Ascending aorta (tissue), 2 donors: ENCODE measurements at regions of chr4 and their contacts with region 1.

Region 1: GRCh38 chr4:134337584-134337983 is 136.0 kb upstream of the PABPC4L start:
- DNase-seq: no peak
- H3K4me3 ChIP-seq: no peak overlapping the region
- H3K27ac ChIP-seq: no peak overlapping the region
- H3K4me1 ChIP-seq: peaks cover 0 to 3% of the 10 kb centered on the region in 2 donors
- H3K27me3 ChIP-seq: no peaks in the 10 kb centered on the region
- CTCF ChIP-seq: no peak

Region 2: DNA sequence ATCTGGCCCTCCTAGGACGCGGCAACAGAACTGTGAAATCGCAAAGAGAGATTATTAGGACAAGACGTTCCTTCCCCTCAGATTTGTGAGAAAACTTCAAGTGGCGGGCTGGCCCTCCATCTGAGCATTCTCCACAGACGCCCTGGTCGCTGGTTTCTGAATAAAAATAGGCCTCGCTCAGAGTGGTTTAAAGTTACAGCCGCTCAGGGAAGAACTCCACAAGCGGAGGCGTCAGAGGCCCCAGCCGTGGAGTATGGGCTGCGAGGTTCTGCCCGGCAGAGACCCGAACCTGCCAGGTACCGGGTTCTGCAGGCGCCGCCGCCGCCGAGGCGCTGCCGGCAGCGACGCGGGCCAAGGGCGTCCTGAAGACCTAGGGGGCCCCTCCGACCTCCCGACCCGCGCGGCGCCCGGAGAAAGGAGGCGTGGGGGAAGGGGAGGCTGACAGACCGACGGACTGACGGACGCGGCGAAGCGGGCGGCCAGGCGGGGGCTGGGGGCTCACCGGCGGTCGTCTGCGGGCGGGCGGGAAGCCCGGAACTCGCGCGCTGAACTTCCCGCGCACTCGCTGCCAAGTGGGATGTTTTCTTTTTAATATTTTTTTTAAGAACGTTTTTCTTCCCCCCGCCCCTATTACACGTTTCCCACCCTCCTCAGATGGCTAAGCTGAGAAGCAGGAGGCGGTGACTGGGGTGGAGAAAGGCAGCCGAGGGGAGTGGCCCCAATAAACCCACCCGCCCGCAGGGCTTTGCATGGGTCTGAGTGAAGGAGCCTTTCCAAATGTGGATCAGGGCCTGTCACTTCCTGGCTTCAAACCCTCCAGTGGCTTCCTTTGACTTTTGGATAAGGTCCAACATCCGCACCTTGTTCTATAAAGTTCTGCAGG is 136.1 kb before region 1 on chr4 and contains the start of gene PABPC4L:
- intact Hi-C with region 1: loop called (anchors 10 kb)
- DNase-seq: peak in 1 of 2 donors; percentile 77
- H3K4me3 ChIP-seq: peak within 1 kb of the TSS; percentile 69 to 86
- H3K27ac ChIP-seq: peak within 1 kb of the TSS; percentile 75 to 86
- H3K4me1 ChIP-seq: no peaks in the 10 kb centered on the region
- H3K27me3 ChIP-seq: no peaks in the 10 kb centered on the region
- CTCF ChIP-seq: no peak
- total RNA-seq, gene PABPC4L: 1.3 TPM